ENCODE measurements at regions of chr19 and their contacts with region 1.

Region 1: DNA sequence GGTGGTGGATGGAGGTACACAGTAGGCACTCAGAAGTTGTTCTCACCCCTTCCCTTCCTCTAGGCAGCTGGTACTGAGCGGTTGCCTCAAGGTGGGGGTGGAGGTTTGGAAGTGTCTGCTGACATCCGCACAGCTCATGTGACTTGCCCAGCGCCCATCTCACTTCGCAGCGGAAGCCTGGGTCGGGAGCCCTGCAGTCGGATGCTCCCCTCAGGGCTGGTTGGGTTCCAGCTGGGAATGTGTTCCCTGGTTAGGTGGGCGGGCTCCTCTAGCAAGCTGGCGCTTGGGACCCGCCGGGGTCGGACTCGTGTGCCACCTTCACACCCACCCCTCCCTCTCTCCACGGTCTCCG is 10.2 kb downstream of the PPP1R37 start:
- DNase-seq: peak; percentile 79
- ATAC-seq: peak; percentile 90
- H3K4me3 Mint-ChIP-seq: peak overlapping the region; percentile 26
- H3K27ac Mint-ChIP-seq: peak overlapping the region; percentile 30
- H3K4me1 Mint-ChIP-seq: peaks cover 45% of the 10 kb centered on the region
- H3K27me3 Mint-ChIP-seq: no peaks in the 10 kb centered on the region

Region 2: GRCh38 chr19:44972802-44973201 is 130.3 kb before region 1 on chr19:
- CTCF ChIA-PET with region 1: no interaction called
- DNase-seq: no peak
- ATAC-seq: no peak
- H3K4me3 Mint-ChIP-seq: no peak overlapping the region
- H3K27ac Mint-ChIP-seq: no peak overlapping the region
- H3K4me1 Mint-ChIP-seq: no peaks in the 10 kb centered on the region
- H3K27me3 Mint-ChIP-seq: no peaks in the 10 kb centered on the region

Region 3: DNA sequence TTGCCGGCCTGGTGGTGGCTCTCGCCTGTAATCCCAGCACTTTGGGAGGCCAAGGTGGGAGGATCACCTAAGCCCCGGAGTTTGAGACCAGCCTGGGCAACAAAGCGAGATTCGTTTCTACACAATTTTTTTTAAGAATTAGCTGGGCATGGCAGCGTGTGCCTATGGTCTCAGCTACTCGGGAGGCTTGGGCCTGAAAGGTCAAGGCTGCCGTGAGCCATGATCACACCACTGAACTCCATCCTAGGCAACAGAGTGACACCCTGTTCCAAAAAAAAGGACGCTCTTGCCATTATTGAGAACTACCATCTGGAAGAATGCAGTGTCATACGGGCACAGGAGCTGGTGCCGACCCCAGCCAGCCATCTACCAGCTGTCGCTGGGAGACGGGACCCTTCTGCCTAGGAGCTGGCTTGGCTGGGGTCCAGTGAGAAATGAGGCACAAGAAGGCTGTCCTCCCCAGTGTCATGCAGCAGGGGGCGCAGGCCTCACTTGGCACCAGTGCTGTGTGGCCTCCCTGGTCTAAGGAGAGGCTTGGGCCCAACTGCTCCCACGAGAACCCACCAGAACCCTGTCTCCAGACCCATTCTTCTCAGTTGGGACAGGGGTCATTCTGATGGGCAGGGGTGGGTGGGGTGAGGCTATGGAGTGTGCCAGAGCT is 114.1 kb before region 1 on chr19:
- CTCF ChIA-PET with region 1: no interaction called
- DNase-seq: peak; percentile 75
- ATAC-seq: peak; percentile 88
- H3K4me3 Mint-ChIP-seq: no peak overlapping the region
- H3K27ac Mint-ChIP-seq: no peak overlapping the region
- H3K4me1 Mint-ChIP-seq: peaks cover 4% of the 10 kb centered on the region
- H3K27me3 Mint-ChIP-seq: no peaks in the 10 kb centered on the region

Region 4: DNA sequence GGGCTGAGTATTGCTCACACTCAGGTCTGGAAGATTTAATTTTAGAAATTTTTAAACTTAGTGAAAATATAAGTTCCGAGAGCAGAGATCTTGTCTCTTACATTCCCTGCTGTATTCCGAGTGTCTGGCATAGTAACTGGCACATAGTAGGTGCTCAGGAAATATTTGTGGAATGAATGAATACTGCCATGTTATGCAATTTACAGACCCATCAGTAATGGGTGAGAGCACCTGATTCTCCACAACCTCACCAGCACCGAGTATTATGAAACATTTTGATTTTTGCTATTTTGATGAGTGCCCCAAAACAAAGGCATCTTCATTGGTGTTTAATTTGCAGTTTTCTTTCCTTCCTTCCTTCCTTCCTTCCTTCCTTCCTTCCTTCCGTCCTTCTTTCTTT is 80.1 kb before region 1 on chr19:
- CTCF ChIA-PET with region 1: no interaction called
- DNase-seq: no peak
- ATAC-seq: no peak
- H3K4me3 Mint-ChIP-seq: no peak overlapping the region
- H3K27ac Mint-ChIP-seq: no peak overlapping the region
- H3K4me1 Mint-ChIP-seq: peaks cover 2% of the 10 kb centered on the region
- H3K27me3 Mint-ChIP-seq: no peaks in the 10 kb centered on the region

Region 5: GRCh38 chr19:45092747-45093678 is 10.1 kb before region 1 on chr19 and contains the start of gene PPP1R37:
- CTCF ChIA-PET with region 1: interaction called, 14 read pairs
- DNase-seq: peak; percentile 94
- ATAC-seq: peak; percentile 84
- H3K4me3 Mint-ChIP-seq: peak within 1 kb of the TSS; percentile 88
- H3K27ac Mint-ChIP-seq: peak within 1 kb of the TSS; percentile 95
- H3K4me1 Mint-ChIP-seq: peaks cover 67% of the 10 kb centered on the region
- H3K27me3 Mint-ChIP-seq: no peaks in the 10 kb centered on the region
- total RNA-seq, gene PPP1R37: 18.7 to 30.0 TPM

Region 6: DNA sequence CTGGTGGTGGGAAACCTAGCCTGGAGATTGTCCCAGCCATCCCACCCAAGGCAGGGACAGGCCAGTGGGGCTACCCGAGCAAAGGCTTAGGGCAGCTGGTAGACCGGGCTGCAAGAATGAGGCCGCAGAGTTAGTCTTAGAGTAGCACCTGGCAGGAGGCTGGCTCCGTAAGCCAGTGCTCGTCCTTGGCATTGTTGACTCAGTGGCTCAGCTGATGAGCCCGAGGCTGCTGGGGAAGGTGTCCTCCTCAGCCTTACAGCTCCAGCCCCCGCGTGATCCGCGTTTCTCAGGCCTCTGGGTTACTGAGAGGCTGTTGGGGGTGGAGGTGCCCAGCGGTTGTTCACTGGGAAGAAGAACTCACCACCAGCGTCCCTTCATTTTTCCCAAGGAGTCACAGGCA is 14.5 kb after region 1 on chr19:
- CTCF ChIA-PET with region 1: interaction called, 12 read pairs
- DNase-seq: no peak
- ATAC-seq: peak; percentile 10
- H3K4me3 Mint-ChIP-seq: no peak overlapping the region
- H3K27ac Mint-ChIP-seq: peak overlapping the region; percentile 66
- H3K4me1 Mint-ChIP-seq: peaks cover 71% of the 10 kb centered on the region
- H3K27me3 Mint-ChIP-seq: no peaks in the 10 kb centered on the region

Region 7: GRCh38 chr19:45125926-45126493 is 22.9 kb after region 1 on chr19:
- CTCF ChIA-PET with region 1: interaction called, 11 read pairs
- DNase-seq: peak; percentile 81
- ATAC-seq: peak; percentile 87
- H3K4me3 Mint-ChIP-seq: no peak overlapping the region
- H3K27ac Mint-ChIP-seq: no peak overlapping the region
- H3K4me1 Mint-ChIP-seq: peaks cover 26% of the 10 kb centered on the region
- H3K27me3 Mint-ChIP-seq: no peaks in the 10 kb centered on the region